ENCODE measurements at regions of chr21 and their contacts with region 1.

Region 1: DNA sequence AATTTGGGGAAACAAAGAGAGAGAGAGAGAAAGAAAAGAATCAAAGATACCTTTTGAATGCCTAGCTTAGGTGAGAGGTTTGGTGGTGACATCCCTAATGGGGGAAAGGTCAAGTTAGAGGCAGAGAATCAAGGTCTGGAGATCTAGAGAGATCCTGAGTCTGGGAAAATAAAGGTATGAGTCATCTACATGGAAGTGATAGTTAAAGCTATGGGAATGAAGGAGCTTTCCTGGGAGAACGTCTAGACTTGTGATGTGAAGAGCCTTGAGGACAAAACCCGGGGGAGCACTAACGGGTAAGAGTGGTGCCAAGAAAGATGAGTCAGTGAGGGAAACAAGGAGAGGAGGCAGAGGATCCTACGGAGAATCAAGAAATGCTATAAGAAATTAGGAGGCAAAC is 110.8 kb upstream of the RUNX1 start:
- DNase-seq: no peak
- H3K4me3 ChIP-seq: no peak overlapping the region
- H3K27ac ChIP-seq: no peak overlapping the region
- H3K4me1 ChIP-seq: no peaks in the 10 kb centered on the region
- H3K27me3 ChIP-seq: no peaks in the 10 kb centered on the region
- CTCF ChIP-seq: no peak

Region 2: DNA sequence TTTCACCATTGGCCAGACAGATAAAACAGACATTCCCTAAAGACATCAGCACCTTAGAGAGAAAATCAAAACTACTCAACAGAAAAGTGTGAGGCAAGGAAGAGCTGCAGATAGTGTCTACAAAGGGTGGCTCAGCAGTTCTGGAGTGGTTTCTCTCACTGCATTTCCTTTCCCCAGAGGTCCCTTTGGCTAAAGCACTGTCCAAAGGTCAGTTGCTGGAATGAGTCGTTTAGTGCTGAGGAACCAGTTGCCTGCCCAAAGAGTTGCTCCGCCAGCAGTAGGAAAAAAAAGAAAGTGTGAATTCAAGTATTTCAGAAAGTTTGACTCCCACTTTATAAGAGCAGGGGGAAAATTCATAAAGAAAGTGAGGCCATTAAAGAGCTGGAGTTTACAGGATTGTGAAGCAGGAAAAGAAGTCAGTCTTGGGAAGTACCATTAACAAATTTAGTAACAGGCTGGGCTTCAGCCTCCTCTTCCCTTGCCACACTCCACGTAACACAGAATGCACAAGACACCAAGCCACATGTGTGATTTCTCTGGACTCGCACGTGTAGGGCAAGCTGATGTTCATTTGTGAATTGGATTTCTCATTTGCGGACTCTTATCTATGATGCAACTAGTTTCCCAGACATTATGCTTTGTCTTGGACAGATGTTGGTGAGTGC is 232.9 kb before region 1 on chr21:
- CTCF ChIA-PET with region 1: no interaction called
- POLR2A ChIA-PET with region 1: no interaction called
- intact Hi-C with region 1: no loop called
- DNase-seq: no peak
- H3K4me3 ChIP-seq: no peak overlapping the region
- H3K27ac ChIP-seq: no peak overlapping the region
- H3K4me1 ChIP-seq: no peaks in the 10 kb centered on the region
- H3K27me3 ChIP-seq: peaks cover 8% of the 10 kb centered on the region
- CTCF ChIP-seq: no peak

Region 3: GRCh38 chr21:35172231-35172630 is 12.3 kb after region 1 on chr21:
- CTCF ChIA-PET with region 1: no interaction called
- POLR2A ChIA-PET with region 1: interaction called, 10 read pairs
- intact Hi-C with region 1: no loop called
- DNase-seq: no peak
- H3K4me3 ChIP-seq: no peak overlapping the region
- H3K27ac ChIP-seq: no peak overlapping the region
- H3K4me1 ChIP-seq: no peaks in the 10 kb centered on the region
- H3K27me3 ChIP-seq: no peaks in the 10 kb centered on the region
- CTCF ChIP-seq: no peak